WTC11 (cell line): ENCODE measurements at regions of chr3 and their contacts with region 1.

Region 1: GRCh38 chr3:11770477-11771391 is 76.0 kb downstream of the TAMM41 start:
- DNase-seq: peak; percentile 78
- ATAC-seq: peak; percentile 92
- H3K4me3 Mint-ChIP-seq: peak overlapping the region; percentile 61
- H3K27ac Mint-ChIP-seq: peak overlapping the region; percentile 68
- H3K4me1 Mint-ChIP-seq: peaks cover 18% of the 10 kb centered on the region
- H3K27me3 Mint-ChIP-seq: peaks cover 15% of the 10 kb centered on the region
- CTCF ChIP-seq: no peak

Region 2: DNA sequence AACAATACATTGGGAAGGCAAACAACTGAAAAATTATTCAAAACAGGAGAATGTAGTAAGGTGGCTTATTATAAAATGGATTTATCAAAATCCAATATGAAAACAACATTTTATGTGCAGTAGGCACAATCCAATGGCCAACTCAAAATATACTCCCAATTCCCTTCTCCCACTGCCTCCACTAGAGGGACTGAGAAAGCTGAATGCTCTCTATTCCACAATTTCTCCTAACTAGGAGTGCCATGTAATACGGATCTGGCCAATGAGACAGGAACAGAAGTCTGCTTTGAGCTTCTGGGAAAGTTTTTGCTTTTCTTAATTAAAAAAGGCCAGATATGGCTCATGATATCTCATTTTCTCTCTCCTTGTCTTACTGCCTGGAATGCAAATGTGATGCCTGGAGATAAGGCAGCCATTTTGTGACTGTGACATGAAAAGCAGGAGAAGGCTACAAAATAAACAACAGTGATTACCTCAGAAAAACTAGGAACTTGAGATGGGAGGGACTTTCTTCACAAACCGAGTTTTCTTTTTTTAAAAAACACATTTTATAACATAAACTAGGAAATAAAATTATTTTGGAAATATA is 108.2 kb before region 1 on chr3:
- CTCF ChIA-PET with region 1: interaction called, 11 read pairs
- POLR2A ChIA-PET with region 1: no interaction called
- DNase-seq: no peak
- ATAC-seq: peak; percentile 47
- H3K4me3 Mint-ChIP-seq: no peak overlapping the region
- H3K27ac Mint-ChIP-seq: no peak overlapping the region
- H3K4me1 Mint-ChIP-seq: peaks cover 3% of the 10 kb centered on the region
- H3K27me3 Mint-ChIP-seq: no peaks in the 10 kb centered on the region
- CTCF ChIP-seq: peak; percentile 14; the same call in 1 of the 2 replicates

Region 3: GRCh38 chr3:12170207-12170606 is 399.5 kb after region 1 on chr3:
- CTCF ChIA-PET with region 1: no interaction called
- POLR2A ChIA-PET with region 1: no interaction called
- DNase-seq: no peak
- ATAC-seq: no peak
- H3K4me3 Mint-ChIP-seq: no peak overlapping the region
- H3K27ac Mint-ChIP-seq: no peak overlapping the region
- H3K4me1 Mint-ChIP-seq: no peaks in the 10 kb centered on the region
- H3K27me3 Mint-ChIP-seq: no peaks in the 10 kb centered on the region
- CTCF ChIP-seq: no peak